HepG2 (cell line): ENCODE measurements at regions of chr18 and their contacts with region 1.

Region 1: GRCh38 chr18:57434536-57435494 is at the start of gene ONECUT2:
- DNase-seq: peak; percentile 85
- ATAC-seq: peak; percentile 89
- H3K4me3 ChIP-seq: peak within 1 kb of the TSS; percentile 69 to 84 (median 78)
- H3K27ac ChIP-seq: no peak within 1 kb of the TSS
- H3K4me1 ChIP-seq: peaks cover 38% of the 10 kb centered on the region
- H3K27me3 ChIP-seq: peaks cover 0 to 14% of the 10 kb centered on the region in 2 experiments; a peak in 2 of 5 replicates
- CTCF ChIP-seq: 0 out of 2 replicates have a peak, but pooled peaks have one; percentile 3
- EP300 ChIP-seq: no peak
- POLR2A ChIP-seq: no peak
- RAD21 ChIP-seq: no peak
- total RNA-seq, gene ONECUT2: 3.0 and 6.2 TPM in 2 replicates

Region 2: DNA sequence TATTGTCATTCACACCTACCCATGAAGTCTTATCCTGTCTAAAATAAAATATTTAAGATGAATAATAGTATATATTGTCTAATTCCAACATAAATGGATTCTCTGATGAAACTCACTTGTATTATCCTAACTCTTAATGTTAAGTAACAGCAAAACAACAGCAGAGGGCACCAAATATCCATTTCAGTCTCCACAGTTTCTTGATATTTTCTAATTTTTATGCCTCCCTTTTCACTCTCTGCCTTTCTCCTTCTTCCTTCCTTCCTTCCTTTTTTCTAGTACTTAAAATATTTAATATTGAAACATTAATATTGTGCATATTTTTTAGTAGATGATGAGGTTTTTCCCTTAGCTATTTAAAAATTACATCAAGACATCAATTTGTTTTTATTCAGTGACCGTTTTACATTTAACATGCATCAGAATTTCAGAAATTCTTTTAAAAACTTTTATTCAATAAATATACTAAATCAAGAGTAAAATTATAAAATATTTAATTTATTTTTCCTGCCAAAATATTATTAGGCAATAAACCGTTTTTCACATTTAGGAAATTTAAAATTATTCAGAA is 686.0 kb before region 1 on chr18:
- CTCF ChIA-PET with region 1: no interaction called
- POLR2A ChIA-PET with region 1: no interaction called
- in situ Hi-C with region 1: loop called (anchors 10 kb)
- intact Hi-C with region 1: loop called (anchors 1 kb)
- DNase-seq: peak; percentile 18
- ATAC-seq: no peak
- H3K4me3 ChIP-seq: no peak overlapping the region
- H3K27ac ChIP-seq: no peak overlapping the region
- H3K4me1 ChIP-seq: no peaks in the 10 kb centered on the region
- H3K27me3 ChIP-seq: no peaks in the 10 kb centered on the region
- CTCF ChIP-seq: peak; percentile 53
- EP300 ChIP-seq: no peak
- POLR2A ChIP-seq: no peak
- RAD21 ChIP-seq: no peak

Region 3: DNA sequence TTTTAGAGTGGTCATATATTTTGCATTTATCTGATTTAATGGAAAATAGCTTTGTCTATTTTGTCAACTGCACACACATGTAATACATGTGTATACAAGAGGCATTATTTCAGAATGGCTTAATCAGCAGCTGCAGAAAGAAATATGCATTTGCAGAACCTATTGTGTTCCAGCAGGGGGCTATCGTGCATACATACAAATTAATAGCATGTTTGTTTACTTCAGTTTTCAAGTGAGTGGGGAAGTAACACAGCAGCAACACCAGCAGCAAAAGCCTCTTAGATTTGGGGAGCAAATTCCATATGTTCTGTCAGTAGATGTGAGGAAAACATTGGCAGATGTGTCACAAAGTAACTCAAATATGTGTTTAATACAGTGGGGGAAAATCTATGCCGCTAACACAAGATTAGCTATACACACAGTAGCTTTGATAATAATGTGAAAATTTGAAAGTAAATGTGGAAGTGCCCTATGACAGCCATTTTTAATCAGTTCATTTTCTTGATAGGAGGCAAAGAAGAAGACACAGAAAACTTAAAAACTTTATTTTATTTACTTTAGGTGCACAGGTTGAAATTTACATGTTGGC is 565.5 kb before region 1 on chr18:
- CTCF ChIA-PET with region 1: interaction called, 4 read pairs
- POLR2A ChIA-PET with region 1: no interaction called
- in situ Hi-C with region 1: loop called (anchors 10 kb)
- intact Hi-C with region 1: loop called (anchors 1 kb)
- DNase-seq: peak; percentile 32
- ATAC-seq: peak; percentile 67
- H3K4me3 ChIP-seq: no peak overlapping the region
- H3K27ac ChIP-seq: no peak overlapping the region
- H3K4me1 ChIP-seq: no peaks in the 10 kb centered on the region
- H3K27me3 ChIP-seq: no peaks in the 10 kb centered on the region
- CTCF ChIP-seq: peak; percentile 73
- EP300 ChIP-seq: no peak
- POLR2A ChIP-seq: no peak
- RAD21 ChIP-seq: 0 out of 2 replicates have a peak, but pooled peaks have one; percentile 34

Region 4: DNA sequence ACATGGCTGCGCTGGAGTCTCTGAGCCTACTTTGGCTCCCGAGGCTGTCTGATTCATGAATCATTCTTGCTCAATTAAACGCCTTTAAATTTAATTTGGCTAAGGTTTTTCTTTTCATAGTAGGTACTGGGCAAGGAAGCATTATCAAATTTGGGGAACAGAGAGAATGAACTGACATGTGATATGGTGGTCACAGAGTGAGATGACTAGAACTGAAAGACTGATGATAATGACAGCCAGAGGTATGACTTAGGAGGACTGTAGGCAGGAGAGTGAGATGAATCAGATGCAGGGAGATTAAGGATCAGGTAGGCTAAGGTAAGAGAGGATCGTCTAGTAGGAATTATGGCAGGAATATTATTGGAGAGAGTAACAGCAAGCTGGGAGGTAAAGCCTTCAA is 123.3 kb before region 1 on chr18:
- CTCF ChIA-PET with region 1: no interaction called
- POLR2A ChIA-PET with region 1: no interaction called
- in situ Hi-C with region 1: no loop called
- intact Hi-C with region 1: no loop called
- DNase-seq: no peak
- ATAC-seq: no peak
- H3K4me3 ChIP-seq: no peak overlapping the region
- H3K27ac ChIP-seq: no peak overlapping the region
- H3K4me1 ChIP-seq: peaks cover 8% of the 10 kb centered on the region
- H3K27me3 ChIP-seq: no peaks in the 10 kb centered on the region
- CTCF ChIP-seq: no peak
- EP300 ChIP-seq: no peak
- POLR2A ChIP-seq: no peak
- RAD21 ChIP-seq: no peak

Region 5: DNA sequence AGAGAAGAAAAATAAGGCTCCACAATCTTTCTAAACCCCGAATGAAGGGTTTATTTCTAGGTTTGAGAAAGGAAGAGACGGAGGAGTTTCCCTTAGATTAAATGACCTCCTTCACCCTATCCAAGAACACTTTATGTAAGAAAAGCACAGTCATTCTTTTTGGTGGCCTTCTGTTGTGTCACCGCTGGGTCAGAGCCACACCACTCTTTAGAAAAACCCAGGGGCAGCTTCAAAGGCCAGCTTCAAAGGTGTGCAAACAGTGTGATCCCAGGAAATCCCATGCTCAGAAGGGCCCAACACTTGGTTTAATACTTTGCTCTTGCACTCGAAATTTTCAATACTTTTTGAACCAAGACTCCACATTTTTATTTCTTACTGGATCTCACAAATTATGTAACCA is 75.4 kb before region 1 on chr18:
- CTCF ChIA-PET with region 1: no interaction called
- POLR2A ChIA-PET with region 1: no interaction called
- in situ Hi-C with region 1: no loop called
- intact Hi-C with region 1: loop called (anchors 1 kb)
- DNase-seq: peak; percentile 34
- ATAC-seq: peak; percentile 97
- H3K4me3 ChIP-seq: no peak overlapping the region; a peak in 1 of 6 replicates
- H3K27ac ChIP-seq: no peak overlapping the region
- H3K4me1 ChIP-seq: peaks cover 14% of the 10 kb centered on the region
- H3K27me3 ChIP-seq: 0 out of 5 replicates have a peak, but pooled peaks cover under 1 to 1% of the 10 kb centered on the region in 2 experiments
- CTCF ChIP-seq: no peak
- EP300 ChIP-seq: peak in 1 of 2 experiments; percentile 45; a peak in 1 of 4 replicates
- POLR2A ChIP-seq: no peak
- RAD21 ChIP-seq: no peak

Region 6: GRCh38 chr18:57533006-57533867 is 98.4 kb after region 1 on chr18:
- CTCF ChIA-PET with region 1: no interaction called
- POLR2A ChIA-PET with region 1: no interaction called
- in situ Hi-C with region 1: no loop called
- intact Hi-C with region 1: loop called (anchors 1 kb)
- DNase-seq: peak; percentile 49
- ATAC-seq: peak; percentile 91
- H3K4me3 ChIP-seq: peak overlapping the region; percentile 33 to 54 (median 38); a peak in 5 of 6 replicates
- H3K27ac ChIP-seq: peak overlapping the region; percentile 37
- H3K4me1 ChIP-seq: peaks cover 37% of the 10 kb centered on the region
- H3K27me3 ChIP-seq: no peaks in the 10 kb centered on the region; a peak in 1 of 5 replicates
- CTCF ChIP-seq: no peak
- EP300 ChIP-seq: no peak
- POLR2A ChIP-seq: no peak
- RAD21 ChIP-seq: no peak